GM13976 (cell line): ENCODE measurements at regions of chrX and their contacts with region 1.

Region 1: DNA sequence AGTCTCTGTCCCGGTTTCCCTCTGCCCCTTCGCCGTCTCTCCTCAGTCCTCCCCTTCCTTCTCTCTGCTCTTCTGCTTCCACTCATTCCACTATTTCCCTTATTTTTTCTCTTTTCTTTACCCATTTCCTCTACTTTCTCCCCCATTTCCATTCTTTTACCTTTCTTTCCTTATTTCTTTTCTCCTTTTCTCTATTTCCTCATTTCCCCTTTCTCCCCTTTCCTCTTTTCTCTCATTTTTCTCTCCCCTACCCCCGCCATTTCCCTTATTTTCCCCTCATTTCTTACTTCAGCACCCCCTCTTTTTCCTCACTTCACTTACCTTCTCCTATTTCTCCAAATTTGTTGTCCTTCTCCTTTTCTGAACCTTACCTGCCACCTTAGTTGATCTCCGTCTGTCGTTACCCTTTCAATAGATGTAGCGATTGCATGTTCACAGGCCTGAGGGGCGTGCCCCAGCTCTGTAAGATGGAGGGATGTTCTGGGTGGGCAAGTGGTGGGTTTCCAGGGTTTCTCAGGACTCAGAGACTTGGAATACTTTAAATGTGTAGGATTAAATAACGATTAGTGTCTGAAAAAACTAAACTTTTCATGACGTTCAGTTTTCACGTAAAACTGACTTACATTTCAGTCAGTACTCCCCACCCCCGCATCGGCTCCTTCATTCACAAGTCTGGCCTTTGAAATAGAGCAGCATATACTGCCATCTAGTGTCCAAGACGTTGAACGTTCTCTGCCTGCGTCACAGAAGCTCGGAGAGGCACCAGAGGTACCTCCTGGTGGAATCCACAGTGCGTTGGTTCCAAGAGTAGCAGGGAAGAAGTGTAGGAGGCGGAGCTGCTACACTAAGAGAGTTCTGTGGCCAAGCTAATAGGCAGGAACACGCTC is 641 bp upstream of the NCBP2L start:
- DNase-seq: peak; percentile 77
- CTCF ChIP-seq: peak; percentile 68

Region 2: GRCh38 chrX:107537815-107538214 is 239.1 kb before region 1 on chrX:
- in situ Hi-C with region 1: loop called (anchors 25 kb)
- DNase-seq: peak; percentile 13
- CTCF ChIP-seq: peak; percentile 24

Region 3: GRCh38 chrX:107659768-107660167 is 117.1 kb before region 1 on chrX:
- in situ Hi-C with region 1: loop called (anchors 10 kb)
- DNase-seq: peak; percentile 38
- CTCF ChIP-seq: peak; percentile 55